ENCODE measurements at regions of chr11 and their contacts with region 1.

Region 1: GRCh38 chr11:124415356-124415923 is 9.2 kb downstream of the OR8B4 start:
- DNase-seq: peak; percentile 42
- H3K4me3 ChIP-seq: no peak overlapping the region
- H3K27ac ChIP-seq: no peak overlapping the region
- H3K4me1 ChIP-seq: no peaks in the 10 kb centered on the region
- H3K27me3 ChIP-seq: peaks cover 17 to 20% of the 10 kb centered on the region in 2 experiments
- CTCF ChIP-seq: peak; percentile 6 to 48
- POLR2A ChIP-seq: no peak

Region 2: GRCh38 chr11:124402326-124402922 is 13.0 kb before region 1 on chr11:
- CTCF ChIA-PET with region 1: interaction called, 12 read pairs
- POLR2A ChIA-PET with region 1: no interaction called
- dilution Hi-C with region 1: no loop called
- intact Hi-C with region 1: no loop called
- DNase-seq: peak; percentile 67
- H3K4me3 ChIP-seq: no peak overlapping the region
- H3K27ac ChIP-seq: no peak overlapping the region
- H3K4me1 ChIP-seq: no peaks in the 10 kb centered on the region
- H3K27me3 ChIP-seq: peaks cover 2 to 10% of the 10 kb centered on the region in 2 experiments
- CTCF ChIP-seq: peak; percentile 80
- POLR2A ChIP-seq: no peak

Region 3: GRCh38 chr11:124429599-124429998 is 14.2 kb after region 1 on chr11:
- CTCF ChIA-PET with region 1: interaction called, 15 read pairs
- POLR2A ChIA-PET with region 1: no interaction called
- dilution Hi-C with region 1: no loop called
- intact Hi-C with region 1: no loop called
- DNase-seq: no peak
- H3K4me3 ChIP-seq: no peak overlapping the region
- H3K27ac ChIP-seq: no peak overlapping the region
- H3K4me1 ChIP-seq: no peaks in the 10 kb centered on the region
- H3K27me3 ChIP-seq: peaks cover 3% of the 10 kb centered on the region in 2 experiments
- CTCF ChIP-seq: no peak
- POLR2A ChIP-seq: no peak

Region 4: GRCh38 chr11:124551189-124551588 is 135.7 kb after region 1 on chr11:
- CTCF ChIA-PET with region 1: no interaction called
- POLR2A ChIA-PET with region 1: no interaction called
- dilution Hi-C with region 1: no loop called
- intact Hi-C with region 1: no loop called
- DNase-seq: no peak
- H3K4me3 ChIP-seq: no peak overlapping the region
- H3K27ac ChIP-seq: no peak overlapping the region
- H3K4me1 ChIP-seq: no peaks in the 10 kb centered on the region
- H3K27me3 ChIP-seq: no peaks in the 10 kb centered on the region
- CTCF ChIP-seq: no peak
- POLR2A ChIP-seq: no peak

Region 5: GRCh38 chr11:124586238-124586860 is 170.9 kb after region 1 on chr11:
- CTCF ChIA-PET with region 1: interaction called, 52 read pairs
- POLR2A ChIA-PET with region 1: no interaction called
- dilution Hi-C with region 1: no loop called
- intact Hi-C with region 1: loop called (anchors 1 kb)
- DNase-seq: peak; percentile 59
- H3K4me3 ChIP-seq: no peak overlapping the region
- H3K27ac ChIP-seq: no peak overlapping the region
- H3K4me1 ChIP-seq: no peaks in the 10 kb centered on the region
- H3K27me3 ChIP-seq: peaks cover 7 to 16% of the 10 kb centered on the region in 2 experiments
- CTCF ChIP-seq: peak; percentile 52 to 57
- POLR2A ChIP-seq: no peak

Region 6: GRCh38 chr11:124758317-124759203 is 343.1 kb after region 1 on chr11:
- CTCF ChIA-PET with region 1: no interaction called
- POLR2A ChIA-PET with region 1: no interaction called
- dilution Hi-C with region 1: no loop called
- intact Hi-C with region 1: no loop called
- DNase-seq: peak; percentile 81
- H3K4me3 ChIP-seq: peak overlapping the region; percentile 23 to 65 (median 36)
- H3K27ac ChIP-seq: peak overlapping the region; percentile 97
- H3K4me1 ChIP-seq: peaks cover 65% of the 10 kb centered on the region
- H3K27me3 ChIP-seq: no peaks in the 10 kb centered on the region
- CTCF ChIP-seq: peak; percentile 73 to 91
- POLR2A ChIP-seq: peak; percentile 42

Region 7: DNA sequence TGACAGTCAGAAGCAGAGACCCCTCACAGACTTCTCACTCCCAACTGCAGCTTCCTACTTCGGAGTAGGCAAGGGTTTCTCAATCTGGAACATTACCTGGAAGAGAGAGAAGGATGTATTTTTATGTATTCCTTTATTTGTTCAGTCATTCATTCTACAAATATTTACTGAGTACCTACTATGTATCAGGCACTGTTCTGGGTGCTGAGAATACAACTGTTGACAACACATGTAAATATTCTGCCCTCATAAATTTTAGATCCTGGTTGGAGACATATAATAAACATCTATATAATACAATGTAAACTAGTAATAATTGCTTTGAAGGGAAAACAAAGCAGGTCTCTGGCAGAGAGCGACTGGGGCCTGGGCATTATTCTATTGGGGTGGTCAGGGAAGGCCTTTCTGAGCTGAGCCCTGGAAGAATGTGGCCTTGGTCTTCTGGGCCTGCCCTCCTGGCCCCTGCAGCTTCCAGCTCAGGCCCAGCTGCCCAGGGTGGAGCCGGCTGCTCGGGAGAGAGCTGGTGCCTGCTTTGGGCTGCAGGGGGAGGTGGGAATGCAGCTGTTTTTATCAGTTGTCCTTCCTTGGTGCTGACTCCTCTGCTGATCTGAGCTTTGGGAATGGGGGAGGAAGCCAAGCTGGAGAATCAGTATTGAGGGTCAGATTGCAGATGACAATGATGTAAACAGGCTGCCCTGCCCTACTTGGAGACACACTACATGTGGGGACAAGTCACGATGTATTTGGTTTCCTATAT is 795.9 kb after region 1 on chr11:
- CTCF ChIA-PET with region 1: no interaction called
- POLR2A ChIA-PET with region 1: no interaction called
- dilution Hi-C with region 1: no loop called
- intact Hi-C with region 1: no loop called
- DNase-seq: no peak
- H3K4me3 ChIP-seq: no peak overlapping the region
- H3K27ac ChIP-seq: no peak overlapping the region
- H3K4me1 ChIP-seq: no peaks in the 10 kb centered on the region
- H3K27me3 ChIP-seq: peaks cover 4 to 22% of the 10 kb centered on the region in 2 experiments
- CTCF ChIP-seq: no peak
- POLR2A ChIP-seq: no peak